Prostate gland (tissue), 2 donors: ENCODE measurements at regions of chr11 and their contacts with region 1.

Region 1: DNA sequence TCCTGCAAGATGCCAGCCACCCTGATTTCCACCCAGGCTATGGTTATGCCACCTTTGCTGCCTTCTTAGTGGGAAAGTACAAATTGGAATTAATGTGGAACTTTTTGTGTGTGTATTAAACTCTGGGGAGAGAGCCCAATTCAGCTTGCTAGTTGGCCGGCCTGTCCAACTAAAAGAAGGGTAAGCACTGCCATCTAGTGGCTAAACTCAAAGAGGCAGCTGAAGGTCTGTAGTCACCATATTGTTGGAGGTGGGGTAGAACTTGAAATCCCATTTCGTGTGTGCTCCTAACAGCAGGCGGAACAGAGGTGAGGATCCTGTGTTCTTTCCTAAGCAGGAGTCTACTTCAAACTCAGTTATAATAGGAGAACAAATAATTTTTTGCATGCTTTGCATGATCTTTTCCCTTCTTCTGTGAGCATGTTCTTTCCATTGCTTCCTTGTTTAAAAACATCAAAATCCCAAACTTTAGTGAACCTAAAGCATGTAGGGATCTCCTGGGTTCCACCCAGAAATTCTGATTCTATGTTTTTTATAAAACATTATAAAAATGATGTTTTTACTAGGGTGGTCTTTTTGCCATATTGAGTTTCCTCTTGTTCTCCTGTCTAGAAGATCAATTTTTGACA is 138.8 kb upstream of the SORL1-AS1 start:
- DNase-seq: peak; percentile 79
- H3K4me3 ChIP-seq: no peak overlapping the region
- H3K27ac ChIP-seq: no peak overlapping the region
- H3K4me1 ChIP-seq: peaks cover 5% of the 10 kb centered on the region
- H3K27me3 ChIP-seq: no peaks in the 10 kb centered on the region
- CTCF ChIP-seq: peak; percentile 81 to 92 (median 88)
- POLR2A ChIP-seq: no peak

Region 2: DNA sequence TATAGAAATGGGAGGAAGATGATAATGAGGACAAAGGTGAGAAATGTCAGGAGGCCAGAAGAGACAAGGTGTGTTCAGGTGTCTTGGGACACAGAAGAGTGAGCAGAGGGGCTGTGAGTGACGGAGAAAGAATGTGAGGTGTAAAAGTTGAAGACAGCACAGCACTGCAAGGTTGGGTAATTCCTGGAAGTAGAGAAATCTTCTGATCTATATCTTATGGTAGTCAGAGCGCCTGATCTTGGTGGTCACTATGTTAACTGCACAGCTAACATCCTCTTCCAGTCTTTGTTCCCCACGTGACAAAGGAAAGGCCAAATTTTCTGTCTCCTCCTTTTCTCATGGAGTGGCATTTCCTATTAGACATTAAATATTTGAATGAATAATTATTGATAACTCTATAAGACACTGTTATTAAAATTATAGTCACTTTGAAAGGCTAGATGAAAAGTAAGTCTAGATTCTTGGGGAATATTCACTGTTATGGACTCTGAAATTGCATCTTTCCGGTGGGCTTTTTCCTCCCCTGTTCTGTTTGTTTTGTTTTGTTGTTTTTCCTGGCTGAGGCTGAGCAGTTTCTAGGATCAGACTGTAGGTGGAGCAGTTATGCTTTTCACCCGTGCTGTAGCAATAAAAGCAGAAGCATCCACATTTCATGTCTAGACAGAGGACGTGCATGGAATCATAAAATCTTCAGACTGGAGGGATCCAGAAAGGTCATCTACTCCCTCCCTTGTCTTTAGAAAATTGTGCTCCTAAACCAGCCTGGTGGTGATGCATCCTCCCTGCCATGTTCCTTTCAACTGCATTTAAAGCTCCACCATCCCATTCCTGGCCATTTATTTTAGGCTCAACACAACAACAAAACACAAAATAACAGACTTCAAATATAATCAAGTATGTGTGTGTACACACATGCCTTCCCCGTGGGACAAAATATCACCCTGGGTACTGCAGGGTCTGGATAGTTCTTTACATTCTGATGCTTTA is 272.4 kb before region 1 on chr11:
- intact Hi-C with region 1: loop called (anchors 2 kb)
- DNase-seq: peak; percentile 47
- H3K4me3 ChIP-seq: no peak overlapping the region
- H3K27ac ChIP-seq: no peak overlapping the region
- H3K4me1 ChIP-seq: no peaks in the 10 kb centered on the region
- H3K27me3 ChIP-seq: no peaks in the 10 kb centered on the region
- CTCF ChIP-seq: peak; percentile 55 to 88 (median 74)
- POLR2A ChIP-seq: no peak

Region 3: GRCh38 chr11:121451986-121452608 is 139.4 kb before region 1 on chr11 and contains the start of gene SORL1:
- intact Hi-C with region 1: loop called (anchors 2 kb)
- DNase-seq: peak; percentile 85
- H3K4me3 ChIP-seq: peak within 1 kb of the TSS; percentile 84 to 85
- H3K27ac ChIP-seq: peak within 1 kb of the TSS; percentile 76 to 82
- H3K4me1 ChIP-seq: no peaks in the 10 kb centered on the region
- H3K27me3 ChIP-seq: no peaks in the 10 kb centered on the region
- CTCF ChIP-seq: peak; percentile 52 to 83 (median 70)
- POLR2A ChIP-seq: no peak
- total RNA-seq, gene SORL1: 77.4 to 97.6 TPM